Heart right ventricle (tissue), 16 donors: ENCODE measurements at regions of chr1 and their contacts with region 1.

Region 1: DNA sequence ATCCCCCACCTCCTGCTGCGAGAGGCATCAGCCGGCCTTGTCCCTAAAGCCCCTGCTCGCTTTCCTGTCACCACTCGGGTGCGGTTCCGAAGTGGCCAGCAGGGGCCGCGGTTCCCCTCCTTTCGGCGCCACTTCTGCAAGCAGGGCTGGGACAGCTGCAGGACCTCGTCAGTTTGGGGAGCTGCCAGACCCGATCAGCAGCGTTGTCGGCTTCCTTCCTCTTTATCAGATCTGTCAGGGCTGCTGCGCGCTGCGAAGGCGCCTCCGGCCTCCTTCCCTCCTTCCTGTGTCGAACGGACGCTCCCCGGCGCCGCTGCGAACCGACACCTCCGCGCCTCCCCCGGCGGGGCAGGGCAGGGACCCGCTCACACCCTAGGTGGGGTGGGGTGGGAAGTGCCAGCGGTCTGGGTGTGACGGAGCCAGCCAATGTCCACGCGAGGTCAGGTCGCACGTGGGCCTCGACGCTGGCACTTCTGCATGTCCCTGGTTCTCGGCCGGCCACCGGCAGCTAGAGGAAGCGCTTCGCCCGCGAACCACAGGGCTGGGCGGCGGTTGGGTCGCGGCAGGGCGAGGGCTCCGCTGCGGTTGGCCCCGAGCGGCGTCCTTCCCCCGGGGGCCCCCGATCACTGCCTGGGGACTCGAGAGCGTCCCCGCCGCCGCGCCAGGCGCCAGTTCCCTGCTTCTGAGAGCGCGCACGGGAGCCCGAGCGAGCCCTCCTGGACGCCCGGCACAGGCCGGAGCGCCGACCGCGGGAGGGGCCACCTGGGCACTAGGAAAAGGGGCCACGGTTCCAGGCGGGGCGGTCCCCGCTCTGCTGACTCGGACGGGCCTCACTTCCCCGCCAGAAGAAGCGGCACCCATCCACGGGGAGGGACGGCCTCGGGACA is 81.8 kb downstream of the RUNX3 start:
- DNase-seq: peak; percentile 93 to 94
- ATAC-seq: peak; percentile 92 to 97 (median 95)
- H3K4me3 ChIP-seq: peak overlapping the region; percentile 13 to 61 (median 56)
- H3K27ac ChIP-seq: peak overlapping the region in 9 of 10 donors; percentile 33 to 86 (median 70)
- H3K4me1 ChIP-seq: peaks cover 0 to 32% (median 17%) of the 10 kb centered on the region in 9 donors
- H3K27me3 ChIP-seq: no peaks in the 10 kb centered on the region
- CTCF ChIP-seq: peak; percentile 86 to 98 (median 93)

Region 2: DNA sequence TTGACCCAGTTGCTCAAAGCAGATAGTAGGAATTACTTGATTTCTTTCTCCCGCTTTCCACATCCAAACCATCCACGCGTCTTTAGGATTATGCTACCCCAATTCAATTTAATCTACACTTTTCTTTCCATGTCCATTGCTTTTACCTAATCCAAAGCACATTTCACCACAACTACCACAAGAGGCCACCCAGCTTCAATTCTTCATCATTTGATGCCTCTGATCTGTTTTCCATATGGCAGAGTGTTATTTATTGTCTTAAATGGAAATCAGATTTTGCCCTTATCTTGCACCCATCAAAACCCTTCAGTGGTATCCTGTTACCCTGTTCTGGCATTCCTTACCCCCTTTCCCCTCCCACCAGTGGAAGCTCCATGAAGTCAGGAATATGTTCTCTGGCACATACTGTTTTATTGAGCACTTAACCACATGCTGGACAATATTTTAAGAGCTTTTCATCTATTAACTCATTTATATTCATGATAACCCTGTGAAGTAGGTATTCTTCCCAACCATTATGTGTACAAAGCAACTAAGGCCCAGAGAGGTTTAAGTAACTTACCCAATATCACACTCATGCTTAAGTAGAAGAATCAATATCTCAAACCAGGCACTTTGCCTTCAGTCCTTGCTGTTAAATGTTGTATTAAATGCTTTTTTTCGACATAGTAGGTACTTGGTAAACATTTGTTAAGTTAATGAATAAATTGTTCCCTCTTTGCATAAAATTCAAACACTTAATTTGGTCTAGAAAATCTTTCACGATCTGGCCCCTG is 68.4 kb before region 1 on chr1:
- intact Hi-C with region 1: no loop called
- DNase-seq: no peak
- ATAC-seq: no peak
- H3K4me3 ChIP-seq: no peak overlapping the region
- H3K27ac ChIP-seq: peak overlapping the region in 1 of 10 donors; percentile 19
- H3K4me1 ChIP-seq: peaks cover 0 to 75% (median 63%) of the 10 kb centered on the region in 9 donors
- H3K27me3 ChIP-seq: no peaks in the 10 kb centered on the region
- CTCF ChIP-seq: peak in 2 of 9 donors; percentile 27 to 31

Region 3: GRCh38 chr1:24897767-24898483 is 49.7 kb after region 1 on chr1:
- intact Hi-C with region 1: loop called in 5 of 10 experiments (anchors 2 to 10 kb)
- DNase-seq: peak; percentile 31 to 40
- ATAC-seq: peak; percentile 42 to 78 (median 62)
- H3K4me3 ChIP-seq: no peak overlapping the region
- H3K27ac ChIP-seq: no peak overlapping the region
- H3K4me1 ChIP-seq: peaks cover 0 to 2% (median 0%) of the 10 kb centered on the region in 9 donors
- H3K27me3 ChIP-seq: peaks cover 0 to 51% (median 17%) of the 10 kb centered on the region in 7 donors
- CTCF ChIP-seq: peak; percentile 44 to 92 (median 73)

Region 4: DNA sequence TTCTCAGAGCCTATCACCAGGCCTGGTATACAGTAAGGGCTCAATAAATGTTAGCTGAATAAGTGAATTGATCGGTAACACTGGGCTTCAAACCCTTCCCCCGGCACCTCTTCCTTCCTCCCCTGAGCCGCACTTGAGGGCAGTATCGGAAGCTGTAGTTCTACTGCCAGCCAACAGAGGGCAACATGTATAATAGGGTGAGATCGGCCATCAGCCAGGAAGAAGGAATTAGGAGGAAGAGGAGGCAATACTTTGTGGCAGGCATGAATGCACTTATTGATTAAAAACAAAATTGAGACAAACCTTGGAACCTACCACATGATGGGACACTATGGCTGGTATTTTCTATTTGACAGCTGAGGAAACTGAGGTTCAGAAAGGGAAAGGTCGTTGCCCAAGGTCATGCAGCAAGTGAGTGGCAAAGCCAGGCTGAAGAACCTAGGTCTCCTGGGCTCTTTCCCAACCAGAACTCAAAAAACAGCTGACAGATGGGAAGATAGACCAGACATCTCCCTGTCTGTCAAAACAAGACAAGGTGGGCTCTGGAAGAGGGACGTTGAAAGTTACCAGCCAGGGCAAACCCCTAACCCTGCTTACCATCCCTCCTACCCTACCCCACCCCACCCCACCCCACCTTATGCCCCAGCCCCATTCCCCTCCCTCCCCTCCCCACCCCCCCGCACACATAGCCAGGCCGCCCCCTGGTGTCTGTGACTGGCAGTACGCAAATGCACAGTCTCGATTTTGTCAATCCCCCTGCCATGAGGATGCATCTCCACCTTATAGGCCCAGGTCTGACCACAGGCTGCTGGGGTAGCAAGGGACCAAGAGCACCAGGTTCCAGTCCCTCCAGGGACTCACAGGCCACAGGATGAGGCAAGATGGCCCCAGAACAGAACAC is 189.2 kb after region 1 on chr1:
- intact Hi-C with region 1: loop called in 5 of 10 experiments (anchors 5 to 10 kb)
- DNase-seq: peak in 1 of 2 donors; percentile 34
- ATAC-seq: no peak
- H3K4me3 ChIP-seq: no peak overlapping the region
- H3K27ac ChIP-seq: peak overlapping the region in 1 of 10 donors; percentile 26
- H3K4me1 ChIP-seq: peaks cover 0 to 34% (median 0%) of the 10 kb centered on the region in 9 donors
- H3K27me3 ChIP-seq: peaks cover 0 to 32% (median 15%) of the 10 kb centered on the region in 7 donors
- CTCF ChIP-seq: peak in 8 of 9 donors; percentile 8 to 74 (median 38)

Region 5: GRCh38 chr1:25198663-25199252 is 350.5 kb after region 1 on chr1:
- intact Hi-C with region 1: loop called in 5 of 10 experiments (anchors 5 to 10 kb)
- DNase-seq: peak; percentile 20 to 44
- ATAC-seq: peak; percentile 43 to 85 (median 74)
- H3K4me3 ChIP-seq: peak overlapping the region in 2 of 10 donors; percentile 1 to 7
- H3K27ac ChIP-seq: peak overlapping the region in 2 of 10 donors; percentile 1 to 28
- H3K4me1 ChIP-seq: peaks cover 0 to 21% (median 12%) of the 10 kb centered on the region in 9 donors
- H3K27me3 ChIP-seq: peaks cover 0 to 20% (median 12%) of the 10 kb centered on the region in 7 donors
- CTCF ChIP-seq: peak in 2 of 9 donors; percentile 13 to 15